Adrenal gland (tissue), 19 donors: ENCODE measurements at regions of chr5 and their contacts with region 1.

Region 1: GRCh38 chr5:137735555-137736284 is at the start of gene KLHL3:
- DNase-seq: peak in 6 of 7 donors; percentile 23 to 62 (median 40)
- H3K4me3 ChIP-seq: peak within 1 kb of the TSS in 2 of 4 donors; percentile 2 to 48
- H3K27ac ChIP-seq: peak within 1 kb of the TSS in 2 of 5 donors; percentile 26 to 46
- H3K4me1 ChIP-seq: peaks cover 0 to 64% of the 10 kb centered on the region in 2 donors
- H3K27me3 ChIP-seq: no peaks in the 10 kb centered on the region
- CTCF ChIP-seq: peak in 2 of 6 experiments; percentile 16 to 23
- POLR2A ChIP-seq: peak in 1 of 2 donors; percentile 18
- total RNA-seq, gene KLHL3: 7.5 to 28.6 (median 13.7) TPM

Region 2: GRCh38 chr5:137660349-137660817 is 75.3 kb before region 1 on chr5:
- intact Hi-C with region 1: loop called (anchors 5 kb)
- DNase-seq: peak; percentile 70 to 93 (median 81)
- H3K4me3 ChIP-seq: no peak overlapping the region
- H3K27ac ChIP-seq: no peak overlapping the region
- H3K4me1 ChIP-seq: peaks cover 0 to 3% of the 10 kb centered on the region in 2 donors
- H3K27me3 ChIP-seq: no peaks in the 10 kb centered on the region
- CTCF ChIP-seq: peak; percentile 74 to 81 (median 77)
- POLR2A ChIP-seq: no peak